ENCODE measurements at regions of chr10 and their contacts with region 1.

Region 1: DNA sequence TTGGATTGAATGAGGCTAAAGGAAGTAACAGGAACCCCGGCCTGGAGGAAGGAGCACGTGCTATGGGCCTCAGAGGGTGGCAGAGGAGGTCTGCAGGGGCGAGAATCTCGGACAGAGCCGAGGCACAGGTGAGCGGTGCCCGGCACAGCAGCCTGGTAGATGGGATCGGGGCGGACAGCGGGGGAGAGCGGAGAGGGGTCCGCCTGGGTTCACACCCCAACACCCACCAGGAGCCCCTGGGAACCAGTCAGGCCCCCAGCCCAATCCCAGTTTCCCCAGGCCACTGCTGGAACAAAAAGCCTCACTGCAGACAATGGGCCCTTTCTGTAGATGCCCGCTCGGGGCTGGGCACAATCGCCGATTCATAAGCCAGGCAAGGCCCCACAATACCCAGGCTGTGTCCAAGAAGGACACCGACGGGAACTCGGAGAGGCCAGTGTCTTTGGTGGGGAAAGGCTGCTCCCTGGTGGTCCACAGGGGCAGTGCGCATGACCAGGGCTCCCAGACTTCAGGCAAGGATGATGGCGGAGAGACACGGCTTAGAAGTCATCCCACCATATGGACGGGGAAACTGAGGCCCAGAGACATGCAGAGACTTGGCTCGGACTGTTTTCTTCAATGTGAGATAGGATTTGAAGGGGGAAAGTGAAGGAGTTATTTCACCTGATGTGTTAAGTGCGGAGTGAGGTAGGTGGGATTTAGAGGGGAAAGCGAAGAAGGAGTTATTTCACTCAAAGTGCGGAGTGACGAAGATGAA is 106.9 kb upstream of the GPR26 start:
- DNase-seq: peak; percentile 42 to 70
- ATAC-seq: peak; percentile 79

Region 2: DNA sequence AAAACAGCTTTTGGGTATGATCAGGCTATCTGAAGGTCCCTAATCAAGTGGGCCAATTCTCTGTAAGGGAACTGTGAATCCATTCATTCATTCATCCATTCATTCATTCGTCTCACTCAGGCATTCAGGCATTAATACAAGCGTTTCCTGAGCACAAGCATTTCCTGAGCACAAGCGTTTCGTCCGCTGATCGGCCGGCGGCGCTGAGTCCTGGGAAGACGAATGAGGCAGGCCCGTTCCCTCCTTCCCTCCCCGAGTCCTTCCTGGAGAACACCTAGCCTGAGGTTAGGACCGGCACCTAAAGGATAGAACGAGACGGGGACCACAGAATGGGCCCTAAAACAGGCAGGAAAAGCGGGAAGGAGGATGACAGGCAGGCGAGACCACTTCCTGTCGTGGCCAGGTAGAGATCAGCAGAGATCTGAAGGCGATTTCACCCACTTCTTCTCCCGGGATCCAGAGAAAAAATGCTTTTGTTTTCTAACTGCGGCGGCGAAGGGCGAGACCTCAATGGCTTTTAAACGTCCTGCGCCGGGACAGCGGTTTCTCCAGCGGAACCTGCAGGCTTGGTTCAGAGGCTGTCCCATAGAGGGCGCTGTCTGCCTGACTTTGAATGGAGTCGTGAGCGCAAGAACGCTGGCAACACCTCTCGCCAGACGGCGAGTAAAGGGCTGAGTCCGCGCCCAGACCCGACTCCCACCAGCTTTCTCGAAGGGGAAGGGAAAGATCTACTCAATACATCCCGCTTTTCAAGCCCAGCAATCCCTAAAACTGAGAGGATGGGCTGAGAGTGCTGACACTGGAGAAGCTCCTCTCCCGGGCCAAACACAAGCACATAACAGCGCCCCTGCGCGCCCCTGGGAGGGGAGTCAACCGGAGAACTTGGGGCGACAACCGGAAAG is 426.4 kb before region 1 on chr10:
- intact Hi-C with region 1: loop called (anchors 2 to 5 kb)
- DNase-seq: peak; percentile 72 to 91
- ATAC-seq: peak; percentile 88

Region 3: DNA sequence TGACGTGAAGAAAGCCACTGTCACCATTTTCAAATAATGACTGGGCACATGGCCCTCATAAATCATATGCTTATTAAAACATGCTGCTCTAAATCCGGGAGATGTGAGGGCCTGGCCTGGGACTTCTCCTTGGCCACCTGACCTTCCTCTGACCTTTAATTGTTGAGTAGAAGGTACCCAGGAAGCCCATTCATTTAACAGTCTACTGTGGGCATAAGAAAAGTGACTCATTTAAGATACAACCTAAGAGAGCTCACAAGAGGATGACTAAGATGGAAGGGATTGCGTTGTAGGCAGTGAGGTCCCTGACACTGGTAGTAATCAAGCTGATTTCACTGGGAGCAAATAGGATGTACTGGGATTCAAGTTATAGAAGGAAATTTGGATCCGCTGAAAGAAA is 96.5 kb before region 1 on chr10:
- intact Hi-C with region 1: no loop called
- DNase-seq: no peak
- ATAC-seq: no peak